WTC11 (cell line): ENCODE measurements at regions of chr1 and their contacts with region 1.

Region 1: GRCh38 chr1:93304716-93305138 is 41.0 kb upstream of the DR1 start:
- DNase-seq: peak; percentile 26
- ATAC-seq: peak; percentile 52; the same call in 1 of the 2 replicates
- H3K4me3 Mint-ChIP-seq: no peak overlapping the region
- H3K27ac Mint-ChIP-seq: no peak overlapping the region; the same call in 1 of the 2 replicates
- H3K4me1 Mint-ChIP-seq: peaks cover 26% of the 10 kb centered on the region
- H3K27me3 Mint-ChIP-seq: no peaks in the 10 kb centered on the region
- CTCF ChIP-seq: peak; percentile 86

Region 2: DNA sequence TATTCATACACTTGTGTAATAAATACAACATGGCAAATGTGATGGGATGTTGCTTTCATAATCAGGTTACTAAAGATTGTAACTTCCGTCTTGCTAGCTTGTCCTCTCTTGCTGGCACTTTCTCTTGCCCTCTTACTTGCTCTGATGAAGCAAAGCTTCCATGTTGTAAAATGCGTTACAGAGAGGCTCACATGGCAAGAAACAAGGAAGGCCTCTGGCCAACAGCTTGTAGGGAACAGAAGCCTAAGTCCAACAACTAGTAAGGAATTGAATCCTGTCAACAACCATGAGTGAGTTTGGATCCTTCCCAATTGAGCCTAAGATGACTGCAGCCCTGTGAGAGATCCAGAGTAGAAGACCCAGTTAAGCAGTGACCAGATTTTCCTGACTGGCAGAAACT is 139.9 kb before region 1 on chr1:
- CTCF ChIA-PET with region 1: no interaction called
- POLR2A ChIA-PET with region 1: no interaction called
- DNase-seq: no peak
- ATAC-seq: no peak
- H3K4me3 Mint-ChIP-seq: no peak overlapping the region
- H3K27ac Mint-ChIP-seq: peak overlapping the region; percentile 60; the same call in 1 of the 2 replicates
- H3K4me1 Mint-ChIP-seq: peaks cover 19% of the 10 kb centered on the region
- H3K27me3 Mint-ChIP-seq: no peaks in the 10 kb centered on the region
- CTCF ChIP-seq: no peak

Region 3: DNA sequence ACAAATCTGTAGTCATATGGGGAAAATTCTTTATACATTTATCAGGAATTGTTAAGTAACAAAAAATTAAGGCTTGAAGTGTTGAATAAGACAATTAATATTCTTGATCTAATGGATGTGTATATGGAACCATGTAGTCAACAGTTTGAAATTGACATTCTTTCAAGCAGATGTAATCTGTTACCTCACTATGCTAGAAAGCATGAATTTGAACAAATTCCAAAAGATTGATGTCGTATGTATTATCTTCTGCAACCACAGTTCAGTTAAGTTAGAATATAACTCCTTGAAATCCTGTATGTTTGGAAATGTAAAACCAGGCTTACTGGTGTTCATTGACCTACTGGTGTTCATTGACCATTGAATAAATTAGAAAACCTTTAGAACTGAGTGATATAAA is 108.1 kb before region 1 on chr1:
- CTCF ChIA-PET with region 1: no interaction called
- POLR2A ChIA-PET with region 1: no interaction called
- DNase-seq: no peak
- ATAC-seq: no peak
- H3K4me3 Mint-ChIP-seq: no peak overlapping the region
- H3K27ac Mint-ChIP-seq: no peak overlapping the region
- H3K4me1 Mint-ChIP-seq: no peaks in the 10 kb centered on the region
- H3K27me3 Mint-ChIP-seq: no peaks in the 10 kb centered on the region
- CTCF ChIP-seq: no peak

Region 4: GRCh38 chr1:93345633-93346420 is 41.1 kb after region 1 on chr1 and contains the start of gene DR1:
- CTCF ChIA-PET with region 1: interaction called, 25 read pairs
- POLR2A ChIA-PET with region 1: interaction called, 4 read pairs
- DNase-seq: peak; percentile 93
- ATAC-seq: peak; percentile 94
- H3K4me3 Mint-ChIP-seq: peak within 1 kb of the TSS; percentile 90
- H3K27ac Mint-ChIP-seq: peak within 1 kb of the TSS; percentile 96
- H3K4me1 Mint-ChIP-seq: peaks cover 24% of the 10 kb centered on the region
- H3K27me3 Mint-ChIP-seq: no peaks in the 10 kb centered on the region
- CTCF ChIP-seq: no peak
- total RNA-seq, gene DR1: 57.1 to 62.8 TPM (median 59.7 TPM) in 3 replicates

Region 5: GRCh38 chr1:93360111-93360510 is 55.4 kb after region 1 on chr1:
- CTCF ChIA-PET with region 1: no interaction called
- POLR2A ChIA-PET with region 1: no interaction called
- DNase-seq: no peak
- ATAC-seq: no peak
- H3K4me3 Mint-ChIP-seq: no peak overlapping the region
- H3K27ac Mint-ChIP-seq: no peak overlapping the region
- H3K4me1 Mint-ChIP-seq: peaks cover 23% of the 10 kb centered on the region
- H3K27me3 Mint-ChIP-seq: no peaks in the 10 kb centered on the region
- CTCF ChIP-seq: no peak

Region 6: DNA sequence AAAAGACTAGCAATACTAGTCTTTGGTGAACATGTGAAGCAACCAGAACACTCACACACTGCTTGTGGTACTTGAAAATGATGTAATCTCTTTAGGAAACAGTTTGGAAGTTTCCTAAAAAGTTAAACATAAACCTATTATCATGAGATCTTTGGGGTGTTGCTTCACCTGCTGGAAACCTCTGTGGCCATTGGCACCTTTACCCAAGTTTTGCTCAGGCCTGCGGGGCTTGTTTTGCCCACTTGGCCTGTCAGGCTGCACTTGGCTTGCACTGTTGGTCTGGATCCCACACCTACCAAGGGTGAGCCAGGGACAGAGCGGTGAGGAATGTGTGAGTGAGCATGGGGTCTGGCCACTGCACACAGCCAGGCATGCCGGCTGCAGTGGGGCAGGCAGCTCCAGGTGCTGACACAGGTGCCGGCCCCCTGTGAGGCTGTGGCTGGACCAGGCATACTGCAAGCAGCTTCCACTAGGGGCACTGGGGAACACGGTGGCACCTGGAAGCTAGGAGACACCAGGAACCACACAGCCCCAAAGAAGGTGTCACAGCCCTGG is 128.8 kb after region 1 on chr1:
- CTCF ChIA-PET with region 1: interaction called, 12 read pairs
- POLR2A ChIA-PET with region 1: no interaction called
- DNase-seq: peak; percentile 56
- ATAC-seq: peak; percentile 90
- H3K4me3 Mint-ChIP-seq: no peak overlapping the region
- H3K27ac Mint-ChIP-seq: no peak overlapping the region
- H3K4me1 Mint-ChIP-seq: no peaks in the 10 kb centered on the region
- H3K27me3 Mint-ChIP-seq: no peaks in the 10 kb centered on the region
- CTCF ChIP-seq: no peak

Region 7: GRCh38 chr1:93552741-93553455 is 248.2 kb after region 1 on chr1:
- CTCF ChIA-PET with region 1: interaction called, 10 read pairs
- POLR2A ChIA-PET with region 1: no interaction called
- DNase-seq: no peak
- ATAC-seq: peak; percentile 66
- H3K4me3 Mint-ChIP-seq: no peak overlapping the region
- H3K27ac Mint-ChIP-seq: peak overlapping the region; percentile 71
- H3K4me1 Mint-ChIP-seq: peaks cover 27% of the 10 kb centered on the region
- H3K27me3 Mint-ChIP-seq: no peaks in the 10 kb centered on the region
- CTCF ChIP-seq: no peak

Region 8: GRCh38 chr1:93615582-93616150 is 310.9 kb after region 1 on chr1:
- CTCF ChIA-PET with region 1: interaction called, 12 read pairs
- POLR2A ChIA-PET with region 1: no interaction called
- DNase-seq: no peak
- ATAC-seq: peak; percentile 23
- H3K4me3 Mint-ChIP-seq: peak overlapping the region; percentile 24; the same call in 1 of the 2 replicates
- H3K27ac Mint-ChIP-seq: peak overlapping the region; percentile 71
- H3K4me1 Mint-ChIP-seq: peaks cover 66% of the 10 kb centered on the region
- H3K27me3 Mint-ChIP-seq: no peaks in the 10 kb centered on the region
- CTCF ChIP-seq: no peak